Activated CD8-positive, alpha-beta memory T cell treated with anti-CD3 and anti-CD28 coated beads, Interleukin-2, amount 10 ng/mL, durations not matched to agents 7 days and 5 days (primary cell): ENCODE measurements at regions of chr1 and their contacts with region 1.

Region 1: GRCh38 chr1:54180701-54181360 is 19.0 kb downstream of the CYB5RL start:
- DNase-seq: no peak
- ATAC-seq: no peak
- H3K4me3 Mint-ChIP-seq: no peak overlapping the region
- H3K27ac Mint-ChIP-seq: no peak overlapping the region
- H3K4me1 Mint-ChIP-seq: no peaks in the 10 kb centered on the region
- H3K27me3 Mint-ChIP-seq: no peaks in the 10 kb centered on the region

Region 2: GRCh38 chr1:54137514-54138061 is 43.2 kb before region 1 on chr1:
- CTCF ChIA-PET with region 1: no interaction called
- DNase-seq: no peak
- ATAC-seq: no peak
- H3K4me3 Mint-ChIP-seq: no peak overlapping the region
- H3K27ac Mint-ChIP-seq: no peak overlapping the region
- H3K4me1 Mint-ChIP-seq: no peaks in the 10 kb centered on the region
- H3K27me3 Mint-ChIP-seq: no peaks in the 10 kb centered on the region

Region 3: DNA sequence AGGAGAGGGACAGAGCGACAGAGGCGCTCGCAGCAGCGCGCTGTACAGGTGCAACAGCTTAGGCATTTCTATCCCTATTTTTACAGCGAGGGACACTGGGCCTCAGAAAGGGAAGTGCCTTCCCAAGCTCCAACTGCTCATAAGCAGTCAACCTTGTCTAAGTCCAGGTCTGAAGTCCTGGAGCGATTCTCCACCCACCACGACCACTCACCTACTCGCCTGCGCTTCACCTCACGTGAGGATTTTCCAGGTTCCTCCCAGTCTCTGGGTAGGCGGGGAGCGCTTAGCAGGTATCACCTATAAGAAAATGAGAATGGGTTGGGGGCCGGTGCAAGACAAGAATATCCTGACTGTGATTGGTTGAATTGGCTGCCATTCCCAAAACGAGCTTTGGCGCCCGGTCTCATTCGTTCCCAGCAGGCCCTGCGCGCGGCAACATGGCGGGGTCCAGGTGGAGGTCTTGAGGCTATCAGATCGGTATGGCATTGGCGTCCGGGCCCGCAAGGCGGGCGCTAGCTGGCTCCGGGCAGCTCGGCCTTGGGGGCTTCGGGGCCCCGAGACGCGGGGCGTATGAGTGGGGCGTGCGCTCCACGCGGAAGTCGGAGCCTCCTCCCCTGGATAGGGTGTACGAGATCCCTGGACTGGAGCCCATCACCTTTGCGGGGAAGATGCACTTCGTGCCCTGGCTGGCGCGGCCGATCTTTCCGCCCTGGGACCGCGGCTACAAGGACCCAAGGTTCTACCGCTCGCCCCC is 19.1 kb after region 1 on chr1 and contains the starts of genes CYB5RL and MRPL37:
- CTCF ChIA-PET with region 1: interaction called, 27 read pairs
- DNase-seq: peak; percentile 95
- ATAC-seq: peak; percentile 98
- H3K4me3 Mint-ChIP-seq: peak within 1 kb of the TSS; percentile 92
- H3K27ac Mint-ChIP-seq: peak within 1 kb of the TSS; percentile 83
- H3K4me1 Mint-ChIP-seq: peaks cover 34% of the 10 kb centered on the region
- H3K27me3 Mint-ChIP-seq: no peaks in the 10 kb centered on the region
- total RNA-seq, gene CYB5RL: 14.5 to 17.0 TPM
- total RNA-seq, gene MRPL37: 122 to 147 TPM

Region 4: DNA sequence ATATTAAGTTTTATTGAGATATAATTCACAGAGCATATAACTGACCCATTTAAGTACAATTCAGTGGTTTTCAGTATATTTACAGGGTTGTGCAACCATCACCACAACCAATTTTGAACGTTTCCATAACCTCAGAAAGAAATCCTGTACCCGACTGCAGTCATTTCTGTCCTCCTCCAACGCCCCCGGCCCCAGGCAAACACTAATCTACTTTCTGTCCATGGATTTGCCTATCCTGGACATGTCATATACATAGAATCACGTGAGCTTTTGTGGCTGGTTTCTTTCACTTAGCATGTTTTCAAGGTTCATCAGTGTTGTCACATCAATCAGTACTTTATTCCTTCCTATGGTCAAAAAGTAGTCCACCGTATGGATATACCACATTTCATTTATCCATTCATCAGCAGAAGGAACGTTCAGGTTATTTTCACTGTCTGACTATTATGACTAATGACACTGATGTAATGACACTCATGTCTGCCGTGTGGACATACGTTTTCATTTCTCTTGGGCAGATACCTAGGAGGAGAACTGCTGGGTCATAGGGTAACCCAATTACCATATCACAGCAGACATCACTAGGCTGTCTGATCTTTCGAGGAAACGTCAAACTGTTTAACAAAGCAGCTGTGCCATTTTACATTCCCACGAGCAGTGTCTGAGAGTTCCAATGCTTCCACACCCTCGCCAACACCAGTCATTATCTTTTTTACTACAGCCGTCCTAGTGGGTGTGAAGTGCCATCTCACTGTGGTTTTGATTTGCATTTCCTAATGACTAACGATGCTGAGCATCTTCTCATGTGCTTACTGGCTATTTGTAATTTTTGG is 49.9 kb after region 1 on chr1:
- CTCF ChIA-PET with region 1: no interaction called
- DNase-seq: peak; percentile 62
- ATAC-seq: peak; percentile 54
- H3K4me3 Mint-ChIP-seq: peak overlapping the region; percentile 30
- H3K27ac Mint-ChIP-seq: peak overlapping the region; percentile 24
- H3K4me1 Mint-ChIP-seq: peaks cover 46% of the 10 kb centered on the region
- H3K27me3 Mint-ChIP-seq: no peaks in the 10 kb centered on the region